RWPE1 (cell line): ENCODE measurements at regions of chr14 and their contacts with region 1.

Region 1: DNA sequence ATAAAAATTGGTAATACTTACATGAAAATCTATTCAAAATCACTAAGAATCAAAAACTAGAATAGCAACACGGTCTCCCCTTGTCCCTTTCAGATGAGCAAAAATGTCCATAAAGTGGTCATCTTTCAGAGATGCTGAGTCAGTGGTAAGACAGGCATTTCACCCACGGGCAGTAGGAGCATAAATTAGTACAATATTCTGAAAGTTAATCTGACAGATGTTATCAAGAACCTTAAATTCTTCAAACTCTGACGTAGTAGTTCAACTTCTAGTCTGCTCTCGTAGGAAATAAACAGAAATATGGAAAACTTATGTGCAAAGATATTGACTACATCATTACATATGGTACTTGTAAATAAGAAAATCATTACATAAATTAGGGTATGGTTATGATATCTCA is 33.1 kb upstream of the GNPNAT1 start:
- DNase-seq: no peak
- H3K27ac ChIP-seq: no peak overlapping the region
- CTCF ChIP-seq: no peak

Region 2: GRCh38 chr14:52791203-52792096 is 33.1 kb before region 1 on chr14 and contains the start of gene GNPNAT1:
- CTCF ChIA-PET with region 1: no interaction called
- POLR2A ChIA-PET with region 1: no interaction called
- DNase-seq: peak; percentile 90
- H3K27ac ChIP-seq: peak within 1 kb of the TSS; percentile 90
- CTCF ChIP-seq: no peak

Region 3: DNA sequence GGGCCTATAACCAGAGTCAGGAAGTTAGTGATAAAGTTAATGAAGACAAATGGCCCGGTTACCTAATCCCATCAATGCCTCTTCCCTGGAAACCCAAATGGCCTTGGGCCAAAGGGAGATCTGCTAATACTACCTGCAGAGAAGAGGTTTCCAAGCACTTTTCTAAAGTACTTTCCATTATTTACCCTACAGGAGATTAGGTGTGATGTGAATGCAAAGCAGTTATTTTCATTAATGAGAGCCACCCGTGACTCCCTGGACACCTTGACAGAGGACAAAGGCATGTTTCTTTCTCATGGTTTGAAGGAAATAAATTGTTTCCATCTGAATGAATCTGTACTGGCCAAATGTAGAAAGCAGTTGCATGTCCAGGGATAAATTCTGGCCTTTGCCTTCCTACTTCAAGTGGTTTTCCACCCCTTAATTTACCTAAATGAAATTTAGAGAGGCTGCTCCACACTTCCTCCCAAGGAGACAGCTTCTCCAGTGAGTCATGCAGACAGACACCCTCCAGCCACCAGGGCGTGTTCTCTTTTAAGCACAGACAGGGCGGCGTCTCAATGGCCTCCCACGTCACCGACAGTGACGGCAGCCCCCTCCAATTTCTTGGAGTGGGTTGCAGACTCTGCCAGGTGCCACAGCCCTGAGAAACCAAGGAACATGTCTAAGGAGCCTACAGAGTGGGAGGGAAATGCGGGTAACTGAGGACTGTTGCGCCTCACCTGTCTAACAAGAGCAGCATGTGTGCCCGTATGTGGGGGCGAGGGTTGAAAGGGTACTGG is 10.8 kb after region 1 on chr14:
- CTCF ChIA-PET with region 1: no interaction called
- POLR2A ChIA-PET with region 1: no interaction called
- DNase-seq: peak; percentile 61
- H3K27ac ChIP-seq: peak overlapping the region; percentile 84
- CTCF ChIP-seq: no peak

Region 4: GRCh38 chr14:52961060-52961639 is 136.6 kb after region 1 on chr14:
- CTCF ChIA-PET with region 1: interaction called, 12 read pairs
- POLR2A ChIA-PET with region 1: no interaction called
- DNase-seq: peak; percentile 72
- H3K27ac ChIP-seq: no peak overlapping the region
- CTCF ChIP-seq: peak; percentile 45